Psoas muscle (tissue), 8 donors: ENCODE measurements at regions of chr4 and their contacts with region 1.

Region 1: DNA sequence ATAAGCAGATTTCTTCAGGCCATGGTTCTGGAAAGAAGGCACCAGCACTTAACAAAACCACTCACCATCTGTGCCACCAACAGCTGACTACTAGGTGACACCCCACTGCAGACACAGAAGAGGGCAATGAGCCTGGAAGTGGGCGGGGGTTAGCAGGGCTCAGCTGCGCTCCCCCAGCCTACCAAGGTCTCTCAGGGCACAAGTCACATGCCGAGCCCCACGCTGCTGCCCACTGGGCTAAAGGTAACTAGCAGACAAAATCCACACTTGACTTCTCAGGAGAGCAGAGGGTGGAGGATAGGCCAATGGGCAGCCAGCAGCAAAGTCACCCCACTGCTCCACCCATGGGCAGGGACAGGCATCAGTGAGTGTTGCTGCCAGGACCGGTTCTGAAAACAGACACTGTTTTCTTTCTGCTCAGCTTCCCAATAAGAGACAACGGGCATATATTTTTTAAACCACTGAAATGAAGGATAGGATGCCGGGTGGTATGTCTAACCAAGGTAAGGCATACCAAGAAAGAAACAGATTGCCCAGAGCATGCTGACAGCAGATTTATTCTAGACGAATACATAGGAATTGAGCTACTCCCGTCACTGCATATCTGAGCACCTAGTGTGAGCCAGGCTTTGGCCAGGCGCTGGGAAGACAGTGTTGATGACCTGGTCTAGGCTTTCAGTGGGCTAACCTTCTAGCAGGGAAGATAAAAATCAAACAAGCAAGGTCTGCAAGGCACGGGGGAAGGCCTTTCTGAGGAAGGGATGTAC is 20.1 kb downstream of the ACSL1 start:
- DNase-seq: peak; percentile 88 to 97
- ATAC-seq: peak; percentile 81 to 89 (median 85)
- H3K4me3 ChIP-seq: peak overlapping the region; percentile 71
- H3K27ac ChIP-seq: peak overlapping the region; percentile 92
- H3K4me1 ChIP-seq: peaks cover 78% of the 10 kb centered on the region
- H3K27me3 ChIP-seq: no peaks in the 10 kb centered on the region
- CTCF ChIP-seq: no peak

Region 2: DNA sequence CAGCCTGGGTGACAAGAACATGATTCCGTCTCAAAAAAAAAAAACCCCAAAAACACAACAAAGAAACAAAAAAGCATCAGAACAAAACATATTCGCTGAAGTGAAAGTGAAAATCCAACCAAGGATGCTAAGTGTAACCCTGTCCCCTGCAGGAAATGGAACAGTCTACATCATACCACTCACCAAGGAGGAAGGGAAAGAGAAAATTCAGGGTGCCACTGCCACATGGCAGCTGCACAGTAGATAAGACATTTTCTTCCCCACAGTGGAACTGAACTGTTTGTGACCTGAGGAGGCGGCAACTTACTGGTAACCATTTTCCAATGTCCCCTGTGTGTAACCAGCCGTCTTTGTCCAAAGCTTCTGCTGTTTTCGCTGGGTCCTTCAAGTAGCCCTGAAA is 43.5 kb before region 1 on chr4:
- intact Hi-C with region 1: loop called in 1 of 2 experiments (anchors 5 kb)
- DNase-seq: no peak
- ATAC-seq: peak in 1 of 4 donors; percentile 6
- H3K4me3 ChIP-seq: no peak overlapping the region
- H3K27ac ChIP-seq: peak overlapping the region; percentile 23
- H3K4me1 ChIP-seq: peaks cover 38% of the 10 kb centered on the region
- H3K27me3 ChIP-seq: no peaks in the 10 kb centered on the region
- CTCF ChIP-seq: no peak

Region 3: GRCh38 chr4:184911310-184911709 is 105.7 kb after region 1 on chr4:
- intact Hi-C with region 1: no loop called
- DNase-seq: no peak
- ATAC-seq: peak in 2 of 4 donors; percentile 56 to 78
- H3K4me3 ChIP-seq: no peak overlapping the region
- H3K27ac ChIP-seq: no peak overlapping the region
- H3K4me1 ChIP-seq: no peaks in the 10 kb centered on the region
- H3K27me3 ChIP-seq: no peaks in the 10 kb centered on the region
- CTCF ChIP-seq: no peak

Region 4: GRCh38 chr4:185142912-185143595 is 337.4 kb after region 1 on chr4 and contains the start of gene SLC25A4:
- intact Hi-C with region 1: loop called in 1 of 2 experiments (anchors 10 kb)
- DNase-seq: peak; percentile 90 to 95
- ATAC-seq: peak; percentile 84 to 88 (median 86)
- H3K4me3 ChIP-seq: peak within 1 kb of the TSS; percentile 72
- H3K27ac ChIP-seq: peak within 1 kb of the TSS; percentile 91
- H3K4me1 ChIP-seq: peaks cover 57% of the 10 kb centered on the region
- H3K27me3 ChIP-seq: no peaks in the 10 kb centered on the region
- CTCF ChIP-seq: peak; percentile 57
- total RNA-seq, gene SLC25A4: 384 to 1,107 (median 729) TPM